ENCODE measurements at regions of chr11 and their contacts with region 1.

Region 1: GRCh38 chr11:47355283-47356128 is 3.0 kb upstream of the MYBPC3 start:
- H3K4me3 ChIP-seq: peak overlapping the region; percentile 18
- H3K27ac ChIP-seq: no peak overlapping the region
- H3K4me1 ChIP-seq: no peaks in the 10 kb centered on the region
- CTCF ChIP-seq: peak; percentile 98

Region 2: DNA sequence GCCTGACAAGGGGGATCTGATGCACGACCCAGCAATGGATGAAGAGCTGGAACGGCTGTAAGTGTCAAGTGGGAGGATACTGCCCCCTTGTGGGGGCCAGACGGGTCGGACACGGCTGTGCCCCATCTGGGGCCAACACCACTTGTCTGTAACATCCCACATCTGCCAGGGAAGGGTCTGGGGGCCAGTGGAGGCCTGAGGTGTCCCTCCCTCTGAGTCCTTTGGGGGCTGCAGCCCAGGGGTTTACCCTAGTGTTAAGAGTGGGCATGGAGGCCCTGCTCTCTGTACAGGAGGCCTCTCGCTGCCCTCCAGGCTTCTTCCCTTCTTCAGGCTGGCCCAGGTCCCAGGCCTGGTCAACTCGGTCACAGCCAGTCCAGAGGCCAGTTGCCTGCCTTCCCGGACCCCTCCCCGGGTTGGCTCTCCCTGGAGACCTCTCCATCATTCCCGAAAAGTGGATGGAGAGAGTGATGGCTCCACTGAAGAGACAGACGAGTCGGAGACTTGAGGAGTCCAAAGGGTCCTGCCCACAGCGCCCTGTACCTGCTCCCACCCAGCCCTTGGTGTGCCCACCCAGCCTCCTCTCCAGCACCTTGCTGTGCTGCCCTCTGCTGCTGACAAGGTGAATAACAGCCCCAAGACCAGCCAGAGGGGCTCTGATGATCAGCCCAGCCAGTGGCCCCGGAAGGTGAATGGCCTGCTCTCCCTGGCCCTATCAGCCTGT is 194.2 kb before region 1 on chr11:
- CTCF ChIA-PET with region 1: interaction called, 10 read pairs
- POLR2A ChIA-PET with region 1: interaction called, 3 read pairs
- H3K4me3 ChIP-seq: no peak overlapping the region
- H3K27ac ChIP-seq: no peak overlapping the region
- H3K4me1 ChIP-seq: no peaks in the 10 kb centered on the region
- CTCF ChIP-seq: peak; percentile 42

Region 3: GRCh38 chr11:47241841-47242301 is 113.6 kb before region 1 on chr11:
- CTCF ChIA-PET with region 1: interaction called, 11 read pairs
- POLR2A ChIA-PET with region 1: no interaction called
- H3K4me3 ChIP-seq: no peak overlapping the region
- H3K27ac ChIP-seq: 0 out of 2 replicates have a peak overlapping the region, but pooled peaks have one; percentile 16
- H3K4me1 ChIP-seq: no peaks in the 10 kb centered on the region
- CTCF ChIP-seq: no peak

Region 4: GRCh38 chr11:47285969-47286770 is 69.3 kb before region 1 on chr11:
- CTCF ChIA-PET with region 1: no interaction called
- POLR2A ChIA-PET with region 1: no interaction called
- H3K4me3 ChIP-seq: no peak overlapping the region
- H3K27ac ChIP-seq: no peak overlapping the region
- H3K4me1 ChIP-seq: no peaks in the 10 kb centered on the region
- CTCF ChIP-seq: no peak